A549 (cell line): ENCODE measurements at regions of chr11 and their contacts with region 1.

Region 1: DNA sequence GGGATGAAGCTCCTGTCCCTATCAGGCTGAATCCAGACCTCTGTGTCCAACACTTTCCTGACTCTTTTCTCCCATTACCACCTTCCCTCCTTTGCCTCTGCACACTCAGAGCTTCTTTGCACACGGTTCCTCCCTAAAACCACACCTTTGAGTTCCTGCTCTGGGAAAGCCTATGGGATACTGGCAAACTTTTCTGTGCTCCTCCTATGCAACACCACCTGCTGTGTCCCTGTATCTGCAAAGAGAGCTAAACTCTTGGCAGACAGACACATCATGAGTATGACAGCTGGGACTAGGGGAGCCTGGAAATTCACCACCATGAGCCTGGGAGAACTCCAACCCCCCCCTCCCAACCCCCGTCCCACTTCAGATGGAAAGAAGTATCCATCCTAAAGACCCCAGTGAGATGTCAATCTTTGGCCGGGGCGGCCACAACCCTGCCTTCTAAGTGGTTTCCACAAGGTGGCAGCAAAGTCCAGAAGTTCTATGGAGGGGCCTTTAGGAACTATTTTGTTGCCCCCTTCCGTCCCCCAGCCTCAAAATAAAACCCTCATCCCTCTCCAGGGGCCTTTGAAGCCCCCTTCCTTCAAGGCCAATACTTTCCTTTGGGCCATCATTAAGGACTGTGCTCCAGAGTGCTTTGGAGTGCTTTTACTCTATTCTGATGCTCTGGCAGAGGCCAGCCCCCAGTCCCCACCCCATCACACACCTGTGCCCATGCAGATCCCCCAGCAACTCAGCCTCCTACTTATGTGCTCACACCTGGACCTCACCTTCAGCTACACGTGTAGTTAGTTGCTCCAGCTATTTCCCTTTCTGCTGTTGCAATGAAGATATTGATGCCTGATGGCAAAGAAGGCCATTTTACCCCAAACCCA is 19.4 kb downstream of the HTR3A start:
- DNase-seq: peak in 1 of 2 experiments; percentile 37
- ATAC-seq: peak in 1 of 2 experiments; percentile 72; a peak in 3 of 6 replicates
- H3K4me3 ChIP-seq: no peak overlapping the region
- H3K27ac ChIP-seq: no peak overlapping the region
- H3K4me1 ChIP-seq: no peaks in the 10 kb centered on the region
- CTCF ChIP-seq: peak; percentile 64
- EP300 ChIP-seq: no peak
- POLR2A ChIP-seq: no peak
- RAD21 ChIP-seq: peak; percentile 68 to 81

Region 2: GRCh38 chr11:113896156-113896879 is 98.0 kb before region 1 on chr11:
- CTCF ChIA-PET with region 1: interaction called, 28 read pairs
- POLR2A ChIA-PET with region 1: no interaction called
- DNase-seq: peak; percentile 15 to 22
- ATAC-seq: peak; percentile 88 to 91
- H3K4me3 ChIP-seq: no peak overlapping the region
- H3K27ac ChIP-seq: no peak overlapping the region
- H3K4me1 ChIP-seq: no peaks in the 10 kb centered on the region
- CTCF ChIP-seq: peak; percentile 66
- EP300 ChIP-seq: no peak
- POLR2A ChIP-seq: no peak
- RAD21 ChIP-seq: peak; percentile 60 to 64

Region 3: DNA sequence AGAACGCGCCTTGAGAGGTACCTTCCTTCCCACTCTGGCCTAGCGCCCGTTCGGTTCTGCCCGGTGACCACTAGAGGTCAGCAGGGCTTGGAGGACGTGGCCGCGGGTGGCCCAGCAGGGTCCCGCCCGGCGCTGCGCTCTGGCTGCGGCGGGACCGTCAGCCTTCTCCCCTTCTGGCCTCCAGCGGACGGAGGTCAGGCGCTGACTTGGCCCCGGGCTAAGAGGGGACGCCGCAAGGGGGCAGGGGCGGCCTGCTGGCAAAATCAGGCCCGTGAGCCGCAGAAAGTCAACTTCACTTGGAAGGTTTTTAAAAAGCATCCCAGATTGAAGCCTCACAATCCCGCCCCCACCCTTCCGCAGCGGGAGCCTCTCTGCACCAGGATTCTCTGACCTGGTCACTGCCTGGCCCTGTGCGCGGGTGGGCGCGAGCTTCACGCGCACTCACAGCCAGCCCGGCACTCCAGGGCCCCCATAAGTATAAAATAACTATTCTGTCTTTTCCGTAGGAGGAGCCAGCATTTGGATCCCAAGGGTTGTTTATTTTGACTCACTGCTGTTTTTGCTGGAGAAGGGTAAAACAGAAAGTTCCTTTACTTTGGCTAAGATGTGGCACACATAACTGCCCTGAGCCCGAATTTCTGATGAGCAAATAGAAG is 42.0 kb after region 1 on chr11:
- CTCF ChIA-PET with region 1: interaction called, 26 read pairs
- POLR2A ChIA-PET with region 1: no interaction called
- DNase-seq: peak; percentile 41 to 72
- ATAC-seq: peak; percentile 96 to 99
- H3K4me3 ChIP-seq: peak overlapping the region; percentile 46
- H3K27ac ChIP-seq: peak overlapping the region; percentile 64 to 66; a peak in 4 of 6 replicates
- H3K4me1 ChIP-seq: peaks cover 6% of the 10 kb centered on the region; the same call in 2 of the 3 replicates
- CTCF ChIP-seq: peak; percentile 70
- EP300 ChIP-seq: no peak
- POLR2A ChIP-seq: no peak
- RAD21 ChIP-seq: peak; percentile 64 to 75